Posterior cingulate gyrus (tissue), 11 donors: ENCODE measurements at regions of chr5 and their contacts with region 1.

Region 1: DNA sequence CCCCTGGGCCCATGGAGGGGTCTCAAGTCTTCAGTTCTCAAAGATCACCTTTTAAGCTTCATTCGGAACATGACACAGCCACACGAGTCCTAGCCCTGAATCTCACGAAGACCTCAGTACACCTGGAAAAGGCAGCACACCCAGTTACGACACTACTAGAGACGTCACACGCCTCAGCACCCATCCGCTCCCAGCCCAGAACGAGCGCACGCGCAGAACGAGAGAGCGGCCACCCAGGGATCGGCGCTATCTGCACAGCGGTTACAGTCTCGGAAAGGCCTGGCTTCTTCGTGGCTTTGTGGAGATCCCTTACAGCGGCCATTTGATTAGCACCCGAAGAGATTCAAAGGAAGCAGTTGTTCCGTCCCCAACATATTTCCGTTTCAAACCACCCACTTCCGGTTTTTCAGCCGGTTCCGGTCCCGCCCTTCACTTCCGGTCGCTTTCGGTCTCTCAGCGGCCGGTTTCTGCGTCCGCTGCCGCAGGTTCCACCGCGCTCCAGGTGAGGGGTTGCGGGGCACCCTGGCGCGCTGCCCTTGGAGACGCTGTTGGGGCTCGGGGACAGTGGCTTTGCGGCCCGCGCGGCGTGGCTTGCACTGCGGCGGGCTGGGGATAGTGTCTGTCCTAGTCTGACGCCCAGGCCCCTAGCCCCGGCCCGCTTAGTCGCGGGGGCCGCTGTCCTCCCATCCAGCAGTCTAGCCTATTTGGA is at the start of gene UBLCP1:
- DNase-seq: peak; percentile 65 to 96 (median 80)

Region 2: GRCh38 chr5:159156426-159157238 is 106.4 kb before region 1 on chr5:
- intact Hi-C with region 1: loop called (anchors 5 kb)
- DNase-seq: peak in 1 of 10 donors; percentile 17

Region 3: DNA sequence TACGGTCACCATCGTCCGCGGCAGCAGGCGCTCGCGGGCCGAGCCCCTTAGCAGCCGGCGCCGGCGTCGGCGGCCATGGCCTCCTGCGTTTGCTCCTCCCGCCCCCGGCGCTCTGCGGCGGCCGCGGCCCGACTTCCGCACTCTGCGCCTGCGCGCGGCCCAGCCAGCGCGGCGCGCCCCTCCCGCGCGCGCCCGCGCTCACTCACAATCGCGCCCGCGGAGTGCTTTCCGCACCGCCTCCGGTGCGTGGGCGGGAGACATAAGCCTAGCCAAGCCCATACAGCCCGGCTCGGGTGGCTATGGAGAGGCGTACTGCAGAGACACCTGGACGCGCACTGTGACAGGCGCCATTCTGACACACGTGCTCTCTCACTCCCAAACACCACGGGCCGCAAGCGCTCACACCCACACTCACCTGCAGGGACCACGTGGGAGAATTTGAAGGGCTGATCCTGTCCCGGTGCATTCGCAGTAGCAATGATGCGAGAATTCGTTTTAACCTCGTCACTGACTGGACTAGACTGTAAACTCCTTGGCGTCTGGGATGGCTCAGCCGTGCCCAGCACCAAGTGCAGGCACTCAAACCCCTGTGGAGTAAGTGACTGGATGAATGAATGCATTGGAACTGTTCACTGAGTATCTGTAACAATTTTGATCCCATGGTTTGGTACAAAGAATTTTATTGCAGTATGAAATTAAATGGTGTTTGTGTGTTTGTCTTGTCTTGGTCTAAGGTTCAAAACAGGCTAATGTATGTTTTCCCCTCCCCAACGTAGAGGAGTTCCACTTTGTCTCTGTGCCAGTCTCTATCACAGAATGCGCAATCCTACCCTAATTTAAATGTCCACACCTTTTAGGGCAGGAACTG is 53.3 kb before region 1 on chr5 and contains the start of gene RNF145:
- intact Hi-C with region 1: loop called (anchors 1 kb)
- DNase-seq: peak; percentile 63 to 97 (median 80)